ENCODE measurements at regions of chr13 and their contacts with region 1.

Region 1: GRCh38 chr13:27620377-27621115 is at the start of gene LNX2:
- DNase-seq: peak; percentile 93 to 97 (median 96)
- ATAC-seq: peak; percentile 82 to 85
- H3K4me3 Mint-ChIP-seq: peak within 1 kb of the TSS; percentile 83 to 97 (median 96)
- H3K27ac Mint-ChIP-seq: peak within 1 kb of the TSS; percentile 88 to 99 (median 98)
- H3K4me1 Mint-ChIP-seq: peaks cover 29 to 70% (median 63%) of the 10 kb centered on the region in 4 donors
- H3K27me3 Mint-ChIP-seq: no peaks in the 10 kb centered on the region
- polyA plus RNA-seq, gene LNX2: 2.5 to 3.1 (median 2.8) TPM

Region 2: GRCh38 chr13:27424246-27425157 is 196.0 kb before region 1 on chr13 and contains the start of gene GTF3A:
- POLR2A ChIA-PET with region 1: interaction called, 84 read pairs
- DNase-seq: peak; percentile 81 to 94 (median 90)
- ATAC-seq: peak; percentile 54 to 63
- H3K4me3 Mint-ChIP-seq: peak within 1 kb of the TSS; percentile 89 to 98 (median 93)
- H3K27ac Mint-ChIP-seq: peak within 1 kb of the TSS; percentile 89 to 99 (median 96)
- H3K4me1 Mint-ChIP-seq: peaks cover 31 to 47% (median 40%) of the 10 kb centered on the region in 4 donors
- H3K27me3 Mint-ChIP-seq: no peaks in the 10 kb centered on the region
- polyA plus RNA-seq, gene GTF3A: 406 to 534 (median 525) TPM

Region 3: GRCh38 chr13:27449936-27450828 is 170.4 kb before region 1 on chr13 and contains the start of gene MTIF3:
- POLR2A ChIA-PET with region 1: interaction called, 106 read pairs
- DNase-seq: peak; percentile 91 to 99 (median 98)
- ATAC-seq: peak; percentile 80
- H3K4me3 Mint-ChIP-seq: peak within 1 kb of the TSS; percentile 86 to 98 (median 95)
- H3K27ac Mint-ChIP-seq: peak within 1 kb of the TSS; percentile 95 to 99 (median 98)
- H3K4me1 Mint-ChIP-seq: peaks cover 27 to 75% (median 60%) of the 10 kb centered on the region in 4 donors
- H3K27me3 Mint-ChIP-seq: peaks cover 0 to 2% (median 0%) of the 10 kb centered on the region in 5 donors
- polyA plus RNA-seq, gene MTIF3: 46.6 to 69.2 (median 60.8) TPM

Region 4: GRCh38 chr13:27455331-27455855 is 165.2 kb before region 1 on chr13:
- POLR2A ChIA-PET with region 1: interaction called, 106 read pairs
- DNase-seq: peak in 3 of 10 donors; percentile 20 to 43 (median 38)
- ATAC-seq: peak in 1 of 2 donors; percentile 33
- H3K4me3 Mint-ChIP-seq: peak overlapping the region; percentile 83 to 98 (median 94)
- H3K27ac Mint-ChIP-seq: peak overlapping the region; percentile 95 to 99 (median 98)
- H3K4me1 Mint-ChIP-seq: peaks cover 12 to 39% (median 31%) of the 10 kb centered on the region in 4 donors
- H3K27me3 Mint-ChIP-seq: peaks cover 0 to 1% (median 0%) of the 10 kb centered on the region in 5 donors

Region 5: DNA sequence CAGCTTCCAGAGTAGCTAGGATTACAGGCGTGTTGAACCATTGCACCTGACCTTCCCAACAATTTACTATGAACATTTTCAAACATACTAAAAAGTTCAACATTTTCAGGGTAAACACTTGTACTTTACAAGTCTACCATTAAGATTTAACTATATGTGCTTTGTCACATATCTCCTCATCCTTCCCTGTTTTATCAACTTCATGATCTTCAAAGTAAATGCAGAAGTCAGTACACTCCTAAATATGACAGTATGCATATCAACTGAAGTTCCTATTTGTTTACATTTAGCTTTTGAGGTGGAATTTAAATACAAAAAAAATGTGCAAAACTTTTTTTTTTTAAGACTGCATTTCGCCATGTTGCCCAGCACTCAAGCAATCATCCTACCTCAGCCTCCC is 18.7 kb before region 1 on chr13:
- POLR2A ChIA-PET with region 1: interaction called, 10 read pairs
- DNase-seq: no peak
- ATAC-seq: no peak
- H3K4me3 Mint-ChIP-seq: no peak overlapping the region
- H3K27ac Mint-ChIP-seq: no peak overlapping the region
- H3K4me1 Mint-ChIP-seq: peaks cover 15 to 38% (median 29%) of the 10 kb centered on the region in 4 donors
- H3K27me3 Mint-ChIP-seq: no peaks in the 10 kb centered on the region

Region 6: DNA sequence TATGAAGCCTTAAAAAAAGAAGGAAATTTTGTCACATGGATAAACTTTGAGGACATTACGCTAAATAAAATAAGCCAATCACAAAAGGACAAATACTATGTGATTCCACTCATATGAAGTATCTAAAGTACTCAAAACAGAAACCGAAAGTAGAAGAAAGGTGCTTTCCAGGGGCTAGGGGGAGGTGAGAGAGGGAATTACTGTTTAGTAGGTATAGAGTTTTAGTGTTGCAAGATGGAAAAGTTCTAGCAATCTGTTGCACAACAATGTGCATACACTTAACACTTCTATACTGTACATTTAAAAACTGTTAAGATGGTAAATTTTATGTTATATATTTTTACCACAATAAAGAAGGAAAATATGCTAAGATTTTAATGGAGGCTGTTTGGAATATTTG is 84.1 kb after region 1 on chr13:
- POLR2A ChIA-PET with region 1: no interaction called
- DNase-seq: no peak
- ATAC-seq: no peak
- H3K4me3 Mint-ChIP-seq: peak overlapping the region in 2 of 10 donors; percentile 31 to 48
- H3K27ac Mint-ChIP-seq: no peak overlapping the region
- H3K4me1 Mint-ChIP-seq: peaks cover 0 to 3% (median 0%) of the 10 kb centered on the region in 4 donors
- H3K27me3 Mint-ChIP-seq: peaks cover 8 to 23% (median 19%) of the 10 kb centered on the region in 5 donors

Region 7: DNA sequence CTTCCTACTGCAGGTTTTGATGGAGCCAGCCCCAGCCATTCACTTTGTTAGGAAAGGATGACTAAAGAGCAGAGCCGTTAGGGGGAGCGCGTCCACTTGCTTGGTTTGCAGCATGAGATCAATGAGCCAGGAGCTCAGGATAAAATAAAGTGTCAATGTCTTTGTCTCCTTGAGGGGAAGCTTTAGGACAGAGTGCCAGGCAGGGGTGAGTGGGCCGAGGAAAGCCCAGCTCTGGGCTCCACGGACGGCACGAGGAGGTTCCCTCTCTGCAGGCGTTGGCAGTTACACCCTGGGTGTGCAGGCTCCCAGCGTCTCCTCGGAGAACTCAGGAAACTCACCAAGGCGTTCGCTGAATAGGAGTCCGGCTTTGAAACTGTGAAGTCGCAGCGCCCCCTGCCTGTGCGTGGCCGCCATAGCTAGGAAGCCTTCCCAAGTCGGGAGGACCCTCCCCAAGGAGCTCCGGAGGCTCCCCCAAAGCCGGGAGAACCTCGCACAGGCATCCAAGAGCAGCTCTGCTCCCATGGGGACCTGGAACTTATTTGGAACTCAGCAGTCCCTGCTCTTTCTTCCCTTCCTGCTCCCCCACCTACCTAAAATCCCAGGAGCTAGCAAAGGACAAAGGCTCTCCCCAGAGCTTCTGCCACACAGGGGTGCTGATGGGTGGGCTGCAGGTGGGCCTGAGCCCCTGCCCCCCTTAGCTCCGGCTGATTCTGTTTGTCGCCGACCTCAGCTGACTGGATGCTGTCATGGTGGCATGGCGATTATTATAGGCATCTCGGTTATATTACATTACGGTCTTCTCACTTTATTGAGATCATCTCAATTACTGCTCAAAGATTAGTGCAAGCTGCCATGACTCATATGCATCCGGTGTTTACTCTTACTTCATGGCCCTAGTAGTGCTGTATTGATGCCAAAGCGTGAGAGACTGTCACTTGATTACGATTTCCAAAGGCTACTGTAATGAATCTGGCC is 206.1 kb after region 1 on chr13:
- POLR2A ChIA-PET with region 1: no interaction called
- DNase-seq: peak; percentile 17 to 80 (median 59)
- ATAC-seq: peak; percentile 49 to 56
- H3K4me3 Mint-ChIP-seq: peak overlapping the region in 4 of 10 donors; percentile 12 to 36 (median 18)
- H3K27ac Mint-ChIP-seq: no peak overlapping the region
- H3K4me1 Mint-ChIP-seq: peaks cover 3 to 9% (median 6%) of the 10 kb centered on the region in 4 donors
- H3K27me3 Mint-ChIP-seq: peaks cover 48 to 94% (median 65%) of the 10 kb centered on the region in 5 donors